Activated T-helper 2 cell treated with anti-CD3 and anti-CD28 coated beads, Interferon-gamma antibody, Interleukin-2, Interleukin-4, amounts not matched to agents 10 μg/mL and 5 μg/mL and 100 μg/mL, durations not matched to agents 14 hours and 24 hours and 36 hours (primary cell): ENCODE measurements at regions of chr9 and their contacts with region 1.

Region 1: DNA sequence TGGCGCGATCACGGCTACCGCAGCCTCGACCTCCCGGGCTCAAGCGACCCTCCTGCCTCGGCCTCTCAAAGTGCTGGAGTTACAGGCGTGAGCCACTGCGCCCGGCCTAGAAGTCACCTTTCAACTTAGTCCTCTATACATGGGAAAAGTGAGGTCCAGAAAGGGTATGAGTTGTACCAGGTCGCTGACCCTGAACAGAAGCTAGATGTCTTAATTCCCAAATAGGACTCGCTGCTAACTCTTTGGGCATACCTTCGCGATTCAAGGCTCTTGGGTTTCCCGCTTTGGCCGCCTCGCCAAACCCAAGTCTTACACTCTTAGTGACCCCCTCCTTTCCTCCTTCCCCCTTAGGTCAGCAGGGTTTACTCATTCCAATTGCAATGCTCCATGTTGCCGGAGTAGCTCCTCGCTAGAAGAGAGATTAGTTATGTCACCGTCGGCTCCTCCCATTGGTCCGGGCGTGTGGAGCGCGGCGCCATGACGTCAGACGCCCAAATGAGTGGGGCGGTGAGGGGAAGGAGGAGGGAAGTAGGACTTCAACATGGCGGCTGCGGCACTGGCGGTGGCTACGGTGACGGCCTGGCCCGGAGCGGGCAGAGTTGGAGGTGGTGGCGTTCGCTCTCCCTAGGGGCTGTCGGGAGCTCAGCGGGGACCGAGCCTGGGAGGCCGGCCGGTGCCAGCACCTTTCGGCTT is at the start of gene UBAP1:
- DNase-seq: peak; percentile 95
- H3K4me3 Mint-ChIP-seq: peak within 1 kb of the TSS; percentile 90
- H3K27ac Mint-ChIP-seq: peak within 1 kb of the TSS; percentile 94
- H3K4me1 Mint-ChIP-seq: peaks cover 11% of the 10 kb centered on the region
- H3K27me3 Mint-ChIP-seq: no peaks in the 10 kb centered on the region
- total RNA-seq, gene UBAP1: 33.6 and 33.7 TPM in 2 replicates

Region 2: DNA sequence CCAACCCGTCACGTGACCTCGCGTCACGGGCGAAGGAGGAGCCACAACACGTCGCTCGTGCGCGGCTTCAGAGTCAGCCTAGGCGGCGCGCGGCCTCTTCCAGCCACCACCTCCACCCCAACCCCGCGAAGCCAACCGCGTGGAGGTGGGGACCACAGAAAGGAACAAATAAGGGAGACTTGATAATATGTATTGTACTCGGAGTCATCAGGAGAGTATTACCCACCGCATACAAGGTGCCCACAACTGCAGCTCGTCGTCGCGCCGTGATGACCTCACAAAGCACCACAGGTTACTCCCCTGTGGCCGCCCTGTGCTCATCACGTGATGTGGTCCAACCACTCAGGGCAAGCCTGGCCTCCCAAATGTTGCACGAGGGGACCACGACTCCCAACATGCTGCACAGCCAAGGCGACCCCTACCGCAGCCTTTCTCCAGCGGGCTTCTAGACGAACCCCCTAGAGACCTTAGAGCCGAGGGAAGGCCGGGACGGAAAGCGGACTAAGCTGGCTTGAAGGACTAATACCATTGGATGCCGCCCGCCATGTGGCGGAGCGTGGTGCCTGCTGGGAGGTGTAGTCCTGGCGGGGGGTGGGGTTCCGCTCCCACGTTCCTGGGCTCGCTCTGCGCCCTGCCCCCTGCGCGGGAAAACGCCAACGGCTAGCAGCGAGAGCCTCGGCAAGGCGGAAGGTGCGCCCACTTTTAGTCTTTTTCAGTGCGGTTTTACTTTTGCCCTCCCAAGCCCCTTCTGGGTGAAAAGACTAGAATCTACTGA is 129.6 kb before region 1 on chr9:
- intact Hi-C with region 1: loop called (anchors 2 kb)
- DNase-seq: peak; percentile 96
- H3K4me3 Mint-ChIP-seq: peak overlapping the region; percentile 91
- H3K27ac Mint-ChIP-seq: peak overlapping the region; percentile 98
- H3K4me1 Mint-ChIP-seq: peaks cover 39% of the 10 kb centered on the region
- H3K27me3 Mint-ChIP-seq: no peaks in the 10 kb centered on the region

Region 3: GRCh38 chr9:34252670-34253459 is 74.2 kb after region 1 on chr9:
- intact Hi-C with region 1: loop called (anchors 5 kb)
- DNase-seq: peak; percentile 58
- H3K4me3 Mint-ChIP-seq: no peak overlapping the region
- H3K27ac Mint-ChIP-seq: no peak overlapping the region
- H3K4me1 Mint-ChIP-seq: no peaks in the 10 kb centered on the region
- H3K27me3 Mint-ChIP-seq: no peaks in the 10 kb centered on the region

Region 4: GRCh38 chr9:34328987-34329832 is 150.5 kb after region 1 on chr9 and contains the starts of genes KIF24 and NUDT2:
- intact Hi-C with region 1: loop called (anchors 1 kb)
- DNase-seq: peak; percentile 97
- H3K4me3 Mint-ChIP-seq: peak within 1 kb of the TSS; percentile 98
- H3K27ac Mint-ChIP-seq: peak within 1 kb of the TSS; percentile 94
- H3K4me1 Mint-ChIP-seq: peaks cover 34% of the 10 kb centered on the region
- H3K27me3 Mint-ChIP-seq: no peaks in the 10 kb centered on the region
- total RNA-seq, gene KIF24: 4.8 and 5.0 TPM in 2 replicates
- total RNA-seq, gene NUDT2: 30.8 and 33.0 TPM in 2 replicates